ENCODE measurements at regions of chr12 and their contacts with region 1.

Region 1: GRCh38 chr12:68610370-68611093 is at the start of gene RAP1B:
- DNase-seq: peak; percentile 88
- H3K4me3 Mint-ChIP-seq: peak within 1 kb of the TSS; percentile 94
- H3K27ac Mint-ChIP-seq: peak within 1 kb of the TSS; percentile 97
- H3K4me1 Mint-ChIP-seq: peaks cover 43% of the 10 kb centered on the region
- H3K27me3 Mint-ChIP-seq: no peaks in the 10 kb centered on the region
- total RNA-seq, gene RAP1B: 174 and 182 TPM in 2 replicates

Region 2: DNA sequence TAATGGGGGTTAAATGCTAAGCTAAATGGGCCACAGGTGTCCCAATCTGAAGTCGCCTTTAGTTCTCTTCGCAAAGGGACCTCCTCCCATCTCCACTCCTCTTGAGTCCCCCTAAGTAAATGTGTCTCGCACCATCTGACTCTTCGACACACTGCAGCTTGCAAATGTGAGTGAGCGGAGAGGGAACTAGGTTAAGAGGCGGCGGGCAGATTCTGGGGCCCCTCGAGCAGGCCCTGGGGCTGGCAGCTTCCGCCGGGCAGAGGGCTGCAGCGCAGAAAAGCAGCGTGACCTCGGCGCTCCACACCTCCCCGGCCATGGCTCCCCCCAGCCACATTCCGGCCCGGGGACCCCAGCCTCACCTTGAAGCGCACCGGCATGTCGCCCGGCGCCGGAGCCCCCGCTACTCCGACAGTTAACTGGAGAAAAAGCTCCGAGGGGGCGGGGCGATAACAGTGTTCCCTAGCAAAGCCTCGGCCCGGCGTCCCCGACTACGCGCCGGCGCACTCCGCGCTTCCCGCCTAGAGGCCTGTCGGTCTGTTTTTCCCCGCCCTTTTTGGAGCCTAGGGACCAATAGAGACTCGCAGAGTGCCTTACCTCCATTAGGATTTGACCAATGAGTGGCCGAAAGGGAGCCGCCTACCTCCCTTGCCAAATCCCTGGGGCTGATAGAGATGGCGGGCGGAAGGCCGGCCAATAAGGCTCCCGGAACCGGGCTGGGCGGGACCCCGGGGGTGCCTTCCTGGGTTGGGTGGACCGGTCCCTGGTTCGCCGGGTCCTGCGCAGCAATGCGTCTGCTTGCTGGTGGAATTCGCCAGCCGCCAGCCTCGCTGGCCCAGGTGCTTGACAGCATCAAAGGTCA is 278.4 kb before region 1 on chr12 and contains the start of gene MDM1:
- intact Hi-C with region 1: loop called (anchors 2 kb)
- DNase-seq: peak; percentile 95
- H3K4me3 Mint-ChIP-seq: peak within 1 kb of the TSS; percentile 87
- H3K27ac Mint-ChIP-seq: peak within 1 kb of the TSS; percentile 36
- H3K4me1 Mint-ChIP-seq: peaks cover 29% of the 10 kb centered on the region
- H3K27me3 Mint-ChIP-seq: peaks cover 7% of the 10 kb centered on the region
- total RNA-seq, gene MDM1: 13.1 and 14.8 TPM in 2 replicates

Region 3: GRCh38 chr12:68451261-68452077 is 159.1 kb before region 1 on chr12:
- intact Hi-C with region 1: loop called (anchors 1 kb)
- DNase-seq: peak; percentile 55
- H3K4me3 Mint-ChIP-seq: peak overlapping the region; percentile 43
- H3K27ac Mint-ChIP-seq: peak overlapping the region; percentile 95
- H3K4me1 Mint-ChIP-seq: peaks cover 78% of the 10 kb centered on the region
- H3K27me3 Mint-ChIP-seq: no peaks in the 10 kb centered on the region

Region 4: DNA sequence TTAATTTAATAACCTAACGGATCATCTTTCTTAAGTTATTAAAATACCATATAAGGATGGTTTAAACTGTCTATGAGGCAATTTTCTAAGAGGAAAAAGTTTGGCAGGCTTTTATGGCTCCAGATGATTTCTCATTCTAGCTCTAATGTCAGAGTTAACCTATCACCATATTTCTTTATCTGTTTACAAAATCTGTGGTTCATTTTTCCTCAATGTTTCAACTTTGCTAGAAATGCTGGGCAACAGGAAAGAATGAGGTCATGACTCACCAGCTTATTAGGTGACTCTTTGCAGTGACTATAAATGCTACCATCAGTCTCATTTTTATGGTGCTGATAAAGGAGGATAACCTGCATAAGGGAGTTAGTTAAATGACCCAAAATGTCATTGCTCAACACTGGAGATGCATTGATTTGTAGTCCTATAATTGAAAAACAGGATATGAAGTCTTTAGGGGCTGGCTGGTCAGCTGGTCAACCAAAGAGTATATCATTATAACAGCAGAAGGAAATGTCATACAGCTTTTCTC is 45.1 kb before region 1 on chr12:
- intact Hi-C with region 1: loop called (anchors 1 kb)
- DNase-seq: no peak
- H3K4me3 Mint-ChIP-seq: no peak overlapping the region
- H3K27ac Mint-ChIP-seq: peak overlapping the region; percentile 48
- H3K4me1 Mint-ChIP-seq: peaks cover 27% of the 10 kb centered on the region
- H3K27me3 Mint-ChIP-seq: no peaks in the 10 kb centered on the region

Region 5: GRCh38 chr12:68641138-68641537 is 30.6 kb after region 1 on chr12:
- intact Hi-C with region 1: loop called (anchors 1 kb)
- DNase-seq: peak; percentile 48
- H3K4me3 Mint-ChIP-seq: peak overlapping the region; percentile 6
- H3K27ac Mint-ChIP-seq: peak overlapping the region; percentile 28
- H3K4me1 Mint-ChIP-seq: peaks cover 57% of the 10 kb centered on the region
- H3K27me3 Mint-ChIP-seq: no peaks in the 10 kb centered on the region

Region 6: GRCh38 chr12:68807576-68808387 is 197.2 kb after region 1 on chr12 and contains the start of gene MDM2:
- intact Hi-C with region 1: loop called (anchors 1 kb)
- DNase-seq: peak; percentile 98
- H3K4me3 Mint-ChIP-seq: peak within 1 kb of the TSS; percentile 93
- H3K27ac Mint-ChIP-seq: peak within 1 kb of the TSS; percentile 99
- H3K4me1 Mint-ChIP-seq: peaks cover 20% of the 10 kb centered on the region
- H3K27me3 Mint-ChIP-seq: no peaks in the 10 kb centered on the region
- total RNA-seq, gene MDM2: 180 and 194 TPM in 2 replicates

Measured in activated T-helper 2 cell treated with anti-CD3 and anti-CD28 coated beads, Interferon-gamma antibody, Interleukin-2, Interleukin-4, amounts not matched to agents 10 μg/mL and 5 μg/mL and 100 μg/mL, durations not matched to agents 14 hours and 24 hours and 36 hours (primary cell).